ENCODE measurements at regions of chr15 and their contacts with region 1.

Region 1: DNA sequence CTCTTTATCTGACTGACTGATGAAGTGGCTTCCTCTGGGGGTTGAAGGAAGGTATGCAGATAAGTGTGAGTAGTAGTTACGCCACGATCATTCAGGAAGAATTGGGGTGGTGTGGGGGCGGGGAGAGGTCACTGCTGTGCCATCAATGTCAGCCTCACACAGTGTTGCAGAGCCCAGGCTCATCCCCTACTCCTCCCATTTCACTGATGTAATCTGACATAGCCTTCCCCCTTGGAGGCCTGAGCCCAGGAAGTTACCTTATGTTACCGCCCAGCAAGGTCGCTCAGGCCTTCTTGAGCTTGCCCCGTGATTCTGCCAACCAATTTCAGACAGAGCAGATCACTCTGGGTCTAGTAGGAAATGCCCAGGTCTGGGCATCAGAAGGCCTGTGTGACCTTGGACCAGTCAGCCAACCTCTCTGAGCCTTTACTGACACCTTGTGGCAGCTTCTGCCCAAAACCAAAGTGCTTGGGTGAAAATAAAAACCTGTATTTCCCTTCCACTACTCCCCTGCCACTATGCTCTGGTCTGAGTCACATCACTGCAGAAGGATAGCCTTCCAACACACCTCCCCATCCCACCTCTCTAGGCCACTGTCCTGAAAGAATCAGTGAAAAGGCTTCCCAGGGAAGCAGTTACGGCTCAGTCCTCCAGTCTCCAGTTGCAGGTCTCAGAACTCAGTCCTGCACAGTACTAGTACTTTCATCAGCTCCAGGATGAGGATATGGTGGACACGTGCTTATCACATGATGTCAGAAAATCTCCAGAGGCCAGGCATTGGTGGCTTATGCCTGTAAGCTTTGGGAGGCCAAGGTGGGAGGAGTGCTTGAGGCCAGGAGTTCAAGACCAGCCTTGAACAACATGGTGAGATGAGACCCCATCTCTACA is 28.1 kb upstream of the INSYN1 start:
- DNase-seq: no peak
- H3K4me3 ChIP-seq: no peak overlapping the region
- CTCF ChIP-seq: peak; percentile 22

Region 2: DNA sequence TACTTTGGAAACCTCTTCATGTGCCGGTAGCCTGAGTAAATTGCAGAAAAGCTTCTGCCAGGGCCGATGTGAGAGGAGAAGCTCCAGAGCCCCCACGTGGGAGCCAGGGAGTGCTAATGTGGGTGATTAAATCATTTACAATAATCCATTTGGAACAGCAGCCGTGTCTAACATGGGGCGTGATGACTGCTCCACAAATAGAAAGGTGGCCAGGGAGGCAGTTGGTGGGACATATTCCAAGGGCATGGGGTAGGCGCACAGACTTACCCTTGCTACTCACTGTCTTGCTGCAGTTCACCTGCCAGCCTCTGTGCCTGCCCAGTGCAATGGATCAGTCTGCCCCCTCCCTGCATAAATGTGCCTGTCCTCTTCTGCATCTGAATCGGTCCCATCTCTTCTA is 11.1 kb after region 1 on chr15:
- CTCF ChIA-PET with region 1: interaction called, 15 read pairs
- POLR2A ChIA-PET with region 1: no interaction called
- DNase-seq: no peak
- H3K4me3 ChIP-seq: no peak overlapping the region
- CTCF ChIP-seq: no peak

Measured in AG04449 (cell line).